ENCODE measurements at regions of chr11 and their contacts with region 1.

Region 1: DNA sequence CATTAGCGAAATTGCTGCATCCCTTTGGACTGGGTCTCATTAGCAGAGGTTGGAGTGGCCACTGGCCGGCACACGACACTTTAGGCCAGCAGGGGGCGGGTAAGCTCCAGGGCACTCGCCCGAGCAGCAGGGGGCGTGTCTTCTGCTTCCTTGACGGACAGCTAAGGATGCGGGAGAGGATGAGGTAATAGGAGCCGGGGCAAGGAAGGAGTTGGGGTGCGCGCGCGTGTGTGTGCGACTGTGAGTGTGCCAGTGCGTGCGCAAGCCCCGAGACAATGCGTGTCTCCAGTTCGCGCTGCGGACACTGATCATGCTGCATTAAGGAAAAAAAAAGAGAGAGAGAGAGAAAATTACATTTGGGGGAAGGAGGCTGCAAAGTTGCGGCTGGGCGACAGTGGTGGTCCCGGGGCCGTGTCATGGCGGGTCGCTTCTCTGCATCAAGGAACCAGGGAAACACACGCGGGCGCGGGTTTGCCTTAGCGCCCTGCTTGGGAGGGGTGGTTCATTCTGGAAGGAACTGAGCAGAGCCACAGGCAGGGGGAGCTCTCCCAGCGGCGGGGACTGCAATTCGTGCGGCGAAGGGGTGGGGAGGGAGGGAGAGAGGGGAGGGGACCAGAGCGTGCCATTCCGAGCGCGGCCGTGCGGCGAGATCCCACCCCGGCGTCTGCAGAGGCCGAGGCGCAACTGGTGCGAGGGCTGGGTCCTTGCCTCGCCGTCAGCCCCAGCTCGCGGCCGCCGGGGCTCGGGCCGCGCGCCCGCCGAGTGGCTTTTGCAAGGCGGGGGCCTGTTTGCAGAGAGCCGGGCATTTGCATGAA is at the start of gene DTX4:
- DNase-seq: peak; percentile 95
- ATAC-seq: peak; percentile 86
- H3K4me3 Mint-ChIP-seq: peak within 1 kb of the TSS; percentile 70
- H3K27ac Mint-ChIP-seq: no peak within 1 kb of the TSS
- H3K4me1 Mint-ChIP-seq: peaks cover 17% of the 10 kb centered on the region
- H3K27me3 Mint-ChIP-seq: peaks cover 14% of the 10 kb centered on the region
- total RNA-seq, gene DTX4: 0.07 to 0.11 TPM

Region 2: DNA sequence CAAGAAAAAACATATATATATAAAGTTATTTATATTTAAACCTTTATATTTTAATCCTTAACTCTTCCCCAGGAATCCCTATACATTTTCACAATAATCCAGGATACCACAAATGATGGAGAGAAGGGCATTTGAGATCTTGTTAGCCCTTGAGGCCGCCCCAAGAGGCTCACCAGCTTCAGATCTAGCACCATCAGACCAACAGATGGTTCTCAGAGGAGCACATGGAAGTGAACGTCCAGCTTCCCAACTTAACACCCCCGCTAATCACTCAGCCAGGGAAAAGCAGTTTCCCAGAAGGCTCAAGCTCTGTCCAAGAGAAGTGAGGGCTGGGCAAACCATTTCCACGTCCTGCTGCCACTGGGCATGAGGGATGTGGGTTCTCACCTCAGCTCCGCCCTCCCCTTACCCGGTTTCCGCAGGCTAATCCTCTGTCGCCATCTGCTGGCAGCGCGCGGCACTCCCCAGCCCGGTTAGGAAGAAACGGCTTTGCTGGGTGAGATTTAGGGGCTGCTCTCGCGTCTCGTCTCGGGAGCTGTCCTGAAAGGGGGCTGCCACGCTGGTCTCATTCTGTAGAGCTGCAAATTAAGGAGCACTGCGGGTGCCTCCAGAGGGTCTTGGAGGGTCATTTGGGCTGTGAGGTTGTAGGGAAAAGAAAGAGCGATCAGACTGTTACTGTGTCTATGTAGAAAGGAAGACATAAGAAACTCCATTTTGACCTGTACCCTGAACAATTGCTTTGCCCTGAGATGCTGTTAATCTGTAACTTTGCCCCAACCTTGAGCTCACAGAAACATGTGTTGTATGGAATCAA is 35.9 kb before region 1 on chr11:
- CTCF ChIA-PET with region 1: interaction called, 10 read pairs
- POLR2A ChIA-PET with region 1: no interaction called
- intact Hi-C with region 1: no loop called
- DNase-seq: peak; percentile 93
- ATAC-seq: peak; percentile 100
- H3K4me3 Mint-ChIP-seq: peak overlapping the region; percentile 11
- H3K27ac Mint-ChIP-seq: peak overlapping the region; percentile 61
- H3K4me1 Mint-ChIP-seq: peaks cover 5% of the 10 kb centered on the region
- H3K27me3 Mint-ChIP-seq: no peaks in the 10 kb centered on the region

Region 3: DNA sequence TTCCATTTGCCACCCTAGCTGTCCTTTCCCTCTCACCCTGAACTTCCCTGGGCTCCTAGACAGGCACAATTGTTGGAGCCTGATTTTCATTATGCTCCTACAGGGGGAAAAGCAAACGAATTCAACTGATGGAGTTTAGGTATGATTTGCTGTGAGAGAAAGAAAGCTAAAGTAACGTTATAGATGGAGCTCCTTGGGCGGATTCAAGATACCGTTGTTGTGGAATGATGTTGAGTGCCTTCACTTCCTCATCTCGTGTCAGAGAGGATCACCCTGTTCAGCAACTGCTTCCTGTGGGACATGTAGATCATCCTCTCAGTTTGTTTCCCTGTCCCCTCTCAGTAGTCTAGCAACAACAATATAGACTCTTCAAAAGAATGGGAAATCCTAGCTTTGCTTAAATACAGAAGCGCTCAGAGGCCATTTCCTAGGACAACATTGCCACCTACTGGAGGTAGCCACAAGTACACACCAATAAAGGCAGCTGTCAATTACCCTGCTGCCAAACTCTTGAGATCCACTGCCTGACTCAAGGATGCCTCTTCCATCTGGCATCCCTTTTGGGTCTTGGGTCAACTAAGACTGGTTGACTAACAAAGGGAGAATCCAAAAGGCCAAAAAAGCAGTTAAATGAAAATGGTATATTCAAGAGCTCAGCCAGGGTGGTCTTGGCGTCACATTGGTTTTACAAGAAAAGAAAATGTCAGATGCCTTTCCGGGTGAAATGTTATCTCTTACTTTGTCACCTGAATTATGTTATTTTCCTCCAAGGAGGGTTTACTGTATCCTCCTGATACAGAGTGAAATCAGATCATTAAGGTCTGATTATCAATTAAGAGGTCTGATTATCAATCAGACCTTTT is 13.3 kb before region 1 on chr11:
- CTCF ChIA-PET with region 1: interaction called, 35 read pairs
- POLR2A ChIA-PET with region 1: no interaction called
- intact Hi-C with region 1: no loop called
- DNase-seq: peak; percentile 74
- ATAC-seq: peak; percentile 98
- H3K4me3 Mint-ChIP-seq: no peak overlapping the region
- H3K27ac Mint-ChIP-seq: no peak overlapping the region
- H3K4me1 Mint-ChIP-seq: peaks cover 6% of the 10 kb centered on the region
- H3K27me3 Mint-ChIP-seq: peaks cover 6% of the 10 kb centered on the region

Region 4: DNA sequence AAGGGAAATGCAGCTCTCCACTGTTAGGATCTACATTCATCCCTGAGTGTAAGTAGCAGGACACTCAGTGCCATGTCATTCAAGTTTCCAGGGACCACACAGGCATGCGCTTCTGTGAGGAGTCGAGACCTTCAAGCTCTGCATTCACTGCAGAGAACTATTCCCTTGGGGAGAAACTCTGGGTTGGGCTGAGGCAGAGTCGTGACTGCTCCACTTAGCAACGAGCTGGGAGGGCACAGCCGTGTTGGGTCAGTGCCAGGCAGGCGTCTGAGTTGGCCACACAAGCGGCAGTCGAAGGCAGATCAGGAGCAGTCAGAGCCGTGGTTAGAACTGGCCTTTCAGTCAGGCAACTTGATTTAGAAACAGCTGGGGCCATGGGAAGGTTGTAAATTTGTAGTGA is 26.3 kb after region 1 on chr11:
- CTCF ChIA-PET with region 1: interaction called, 48 read pairs
- POLR2A ChIA-PET with region 1: no interaction called
- intact Hi-C with region 1: no loop called
- DNase-seq: no peak
- ATAC-seq: no peak
- H3K4me3 Mint-ChIP-seq: no peak overlapping the region
- H3K27ac Mint-ChIP-seq: no peak overlapping the region
- H3K4me1 Mint-ChIP-seq: peaks cover 16% of the 10 kb centered on the region
- H3K27me3 Mint-ChIP-seq: peaks cover 2% of the 10 kb centered on the region

Region 5: GRCh38 chr11:59429924-59430516 is 258.3 kb after region 1 on chr11:
- CTCF ChIA-PET with region 1: interaction called, 33 read pairs
- POLR2A ChIA-PET with region 1: no interaction called
- intact Hi-C with region 1: loop called (anchors 1 kb)
- DNase-seq: peak; percentile 45
- ATAC-seq: peak; percentile 83
- H3K4me3 Mint-ChIP-seq: no peak overlapping the region
- H3K27ac Mint-ChIP-seq: no peak overlapping the region
- H3K4me1 Mint-ChIP-seq: no peaks in the 10 kb centered on the region
- H3K27me3 Mint-ChIP-seq: peaks cover 6% of the 10 kb centered on the region

Region 6: GRCh38 chr11:59448484-59448883 is 276.8 kb after region 1 on chr11:
- CTCF ChIA-PET with region 1: no interaction called
- POLR2A ChIA-PET with region 1: no interaction called
- intact Hi-C with region 1: no loop called
- DNase-seq: no peak
- ATAC-seq: no peak
- H3K4me3 Mint-ChIP-seq: no peak overlapping the region
- H3K27ac Mint-ChIP-seq: no peak overlapping the region
- H3K4me1 Mint-ChIP-seq: no peaks in the 10 kb centered on the region
- H3K27me3 Mint-ChIP-seq: peaks cover 5% of the 10 kb centered on the region

Region 7: GRCh38 chr11:59802639-59803176 is 631.0 kb after region 1 on chr11:
- CTCF ChIA-PET with region 1: no interaction called
- POLR2A ChIA-PET with region 1: no interaction called
- intact Hi-C with region 1: loop called in 1 of 2 experiments (anchors 1 kb)
- DNase-seq: peak; percentile 40
- ATAC-seq: peak; percentile 61
- H3K4me3 Mint-ChIP-seq: no peak overlapping the region
- H3K27ac Mint-ChIP-seq: no peak overlapping the region
- H3K4me1 Mint-ChIP-seq: no peaks in the 10 kb centered on the region
- H3K27me3 Mint-ChIP-seq: no peaks in the 10 kb centered on the region

Measured in activated CD4-positive, alpha-beta T cell treated with anti-CD3 and anti-CD28 coated beads for 36 hours (primary cell).